SK-N-SH (cell line): ENCODE measurements at regions of chr11 and their contacts with region 1.

Region 1: GRCh38 chr11:124837491-124837856 is 27.8 kb upstream of the ROBO3 start:
- DNase-seq: peak; percentile 70
- H3K4me3 ChIP-seq: peak overlapping the region in 1 of 2 experiments; percentile 52; a peak in 2 of 4 replicates
- H3K27ac ChIP-seq: peak overlapping the region in 1 of 2 experiments; percentile 54; a peak in 1 of 4 replicates
- H3K4me1 ChIP-seq: peaks cover 3 to 4% of the 10 kb centered on the region in 2 experiments; a peak in 2 of 4 replicates
- H3K27me3 ChIP-seq: peaks cover 1% of the 10 kb centered on the region
- CTCF ChIP-seq: peak; percentile 60
- EP300 ChIP-seq: no peak
- RAD21 ChIP-seq: peak; percentile 77

Region 2: DNA sequence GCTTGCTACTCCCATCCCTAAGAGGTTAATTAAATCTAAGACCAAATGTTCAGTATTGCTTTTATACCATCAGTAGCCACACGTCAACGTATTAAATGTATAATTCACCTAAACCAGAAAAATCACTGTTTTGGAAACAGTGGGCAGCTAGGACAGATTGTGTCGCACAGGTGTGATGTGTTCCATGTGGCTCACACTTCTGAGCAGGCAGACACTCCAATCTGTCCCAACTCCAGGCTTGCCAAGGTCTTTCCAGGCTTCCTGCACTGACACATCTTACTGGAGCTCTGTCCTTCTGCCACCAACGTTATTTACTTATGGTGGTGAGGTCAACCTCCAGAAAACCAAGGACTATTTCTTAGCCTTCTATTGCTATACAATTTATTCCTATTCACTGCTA is 175.4 kb before region 1 on chr11:
- CTCF ChIA-PET with region 1: interaction called, 26 read pairs
- POLR2A ChIA-PET with region 1: no interaction called
- DNase-seq: no peak
- H3K4me3 ChIP-seq: no peak overlapping the region
- H3K27ac ChIP-seq: no peak overlapping the region
- H3K4me1 ChIP-seq: peaks cover 0 to 5% of the 10 kb centered on the region in 2 experiments; a peak in 2 of 4 replicates
- H3K27me3 ChIP-seq: no peaks in the 10 kb centered on the region
- CTCF ChIP-seq: no peak
- EP300 ChIP-seq: no peak
- RAD21 ChIP-seq: no peak

Region 3: DNA sequence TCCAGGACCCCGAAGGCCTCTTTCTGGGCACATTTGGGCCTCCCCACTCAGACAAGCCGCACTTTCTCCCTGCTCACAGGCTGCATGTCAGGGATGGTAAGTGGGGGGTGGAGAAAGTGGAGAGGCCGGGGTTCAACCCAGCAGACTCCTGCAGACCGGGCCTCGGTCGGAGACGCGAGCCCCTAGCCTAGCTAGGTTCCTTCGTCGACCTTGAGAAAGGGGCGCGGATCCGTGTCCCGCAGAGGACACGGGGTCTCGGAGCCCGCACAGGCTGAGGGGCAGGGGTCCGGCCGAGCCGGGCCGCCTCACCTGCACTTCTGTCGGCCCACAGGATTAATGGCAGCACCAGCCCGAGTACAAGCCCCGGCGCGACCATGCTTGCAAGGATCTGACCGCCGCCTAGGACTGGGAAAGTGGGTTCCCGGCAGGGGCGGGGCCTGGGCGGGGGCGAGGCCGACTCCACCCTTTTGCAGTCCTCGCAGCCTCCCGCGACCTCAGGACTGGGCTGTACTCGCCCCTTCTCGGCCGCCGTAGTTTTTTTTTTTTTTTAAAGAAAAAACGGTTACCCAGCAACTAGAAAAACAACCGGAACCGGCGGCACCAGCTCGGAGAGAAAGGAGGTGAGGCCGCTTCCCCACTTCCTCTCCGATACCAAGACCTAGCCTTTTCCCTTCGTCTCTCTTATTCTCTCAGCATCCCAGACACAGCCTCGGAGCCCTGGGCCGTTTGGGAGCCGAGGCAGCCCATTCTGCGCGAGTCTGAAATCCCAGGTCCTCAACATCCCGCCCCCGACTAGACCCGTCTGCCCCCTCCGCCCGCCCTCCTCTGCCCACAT is 163.9 kb before region 1 on chr11 and contains the starts of genes SIAE and SPA17:
- CTCF ChIA-PET with region 1: interaction called, 46 read pairs
- POLR2A ChIA-PET with region 1: no interaction called
- DNase-seq: peak; percentile 97
- H3K4me3 ChIP-seq: peak within 1 kb of the TSS; percentile 87 to 89
- H3K27ac ChIP-seq: peak within 1 kb of the TSS; percentile 87 to 88
- H3K4me1 ChIP-seq: peaks cover 0 to 11% of the 10 kb centered on the region in 2 experiments; a peak in 1 of 4 replicates
- H3K27me3 ChIP-seq: no peaks in the 10 kb centered on the region
- CTCF ChIP-seq: no peak
- EP300 ChIP-seq: peak in 1 of 2 experiments; percentile 48; a peak in 1 of 4 replicates
- RAD21 ChIP-seq: no peak
- polyA plus RNA-seq, gene SIAE: 27.9 and 47.0 TPM in 2 replicates
- polyA plus RNA-seq, gene SPA17: 7.7 and 11.7 TPM in 2 replicates

Region 4: DNA sequence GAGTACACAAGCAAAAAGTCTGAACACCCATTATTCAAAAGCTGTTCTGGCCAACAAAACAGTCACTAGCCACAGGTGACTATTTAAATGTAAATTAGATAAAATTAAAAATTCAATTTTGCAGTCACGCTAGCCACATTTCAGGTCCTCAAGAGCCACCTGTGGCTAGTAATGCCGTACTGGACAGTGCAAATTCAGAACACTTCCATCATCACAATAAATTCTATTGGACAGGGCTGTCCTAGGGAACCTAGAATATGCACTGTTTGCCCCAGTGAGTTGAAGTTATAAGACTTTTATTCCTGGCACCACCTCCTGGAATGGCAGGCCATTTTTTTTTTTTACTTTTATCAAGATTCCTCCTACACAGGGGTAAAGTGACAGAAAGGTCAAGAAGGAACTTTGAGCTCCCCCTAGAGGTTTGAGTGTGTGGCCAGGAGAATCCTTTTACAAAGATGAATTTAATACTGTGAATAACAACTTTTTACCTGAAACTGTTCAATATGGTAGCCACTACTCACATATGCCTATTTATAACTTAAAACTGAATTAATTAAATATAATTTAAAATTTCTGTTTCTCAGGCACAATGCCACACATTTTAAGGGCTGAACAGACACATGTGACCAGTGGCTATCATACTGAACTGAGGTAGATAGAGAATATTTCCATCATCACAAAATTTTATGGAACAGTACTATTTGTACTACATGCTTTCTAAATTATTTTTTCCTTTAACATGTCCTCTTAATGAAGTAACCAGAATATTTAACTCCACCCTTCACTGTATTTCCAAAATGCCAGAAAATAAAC is 43.8 kb before region 1 on chr11:
- CTCF ChIA-PET with region 1: interaction called, 23 read pairs
- POLR2A ChIA-PET with region 1: no interaction called
- DNase-seq: peak; percentile 52
- H3K4me3 ChIP-seq: no peak overlapping the region
- H3K27ac ChIP-seq: no peak overlapping the region
- H3K4me1 ChIP-seq: peaks cover 9 to 16% of the 10 kb centered on the region in 2 experiments; a peak in 3 of 4 replicates
- H3K27me3 ChIP-seq: no peaks in the 10 kb centered on the region
- CTCF ChIP-seq: peak; percentile 82
- EP300 ChIP-seq: no peak
- RAD21 ChIP-seq: peak; percentile 67

Region 5: GRCh38 chr11:124800226-124800929 is 37.1 kb before region 1 on chr11 and contains the start of gene MSANTD2:
- CTCF ChIA-PET with region 1: interaction called, 23 read pairs
- POLR2A ChIA-PET with region 1: no interaction called
- DNase-seq: peak; percentile 93
- H3K4me3 ChIP-seq: peak within 1 kb of the TSS; percentile 68 to 70
- H3K27ac ChIP-seq: peak within 1 kb of the TSS; percentile 95 to 97
- H3K4me1 ChIP-seq: peaks cover 8 to 10% of the 10 kb centered on the region in 2 experiments; a peak in 3 of 4 replicates
- H3K27me3 ChIP-seq: no peaks in the 10 kb centered on the region
- CTCF ChIP-seq: no peak
- EP300 ChIP-seq: 0 out of 4 replicates have a peak, but pooled peaks of 1 of the 2 experiments have one; percentile 8
- RAD21 ChIP-seq: 0 out of 2 replicates have a peak, but pooled peaks have one; percentile 2
- polyA plus RNA-seq, gene MSANTD2: 6.4 and 8.5 TPM in 2 replicates

Region 6: DNA sequence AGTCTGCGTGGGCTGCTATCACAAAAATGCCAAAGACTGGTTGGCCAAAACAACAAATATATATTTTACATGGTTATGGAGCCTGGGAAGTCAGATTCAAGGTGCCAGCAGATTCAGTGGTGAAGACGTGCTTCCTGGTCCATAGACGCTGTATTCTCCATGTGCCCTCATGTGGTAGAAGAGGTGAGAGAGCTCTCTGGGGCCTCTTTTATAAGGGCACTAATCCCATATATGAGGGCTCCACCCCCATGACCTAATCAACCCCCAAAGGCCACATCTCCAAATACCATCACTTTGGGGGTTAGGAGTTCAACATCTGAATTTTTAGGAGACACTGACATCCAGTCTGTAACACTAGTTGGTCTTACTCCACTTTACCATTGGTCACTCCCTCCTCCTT is 18.0 kb after region 1 on chr11:
- CTCF ChIA-PET with region 1: interaction called, 25 read pairs
- POLR2A ChIA-PET with region 1: no interaction called
- DNase-seq: no peak
- H3K4me3 ChIP-seq: no peak overlapping the region
- H3K27ac ChIP-seq: no peak overlapping the region
- H3K4me1 ChIP-seq: no peaks in the 10 kb centered on the region
- H3K27me3 ChIP-seq: peaks cover 19% of the 10 kb centered on the region; the same call in 1 of the 2 replicates
- CTCF ChIP-seq: no peak
- EP300 ChIP-seq: no peak
- RAD21 ChIP-seq: no peak

Region 7: GRCh38 chr11:124875943-124876817 is 38.7 kb after region 1 on chr11:
- CTCF ChIA-PET with region 1: interaction called, 220 read pairs
- POLR2A ChIA-PET with region 1: no interaction called
- DNase-seq: peak; percentile 96
- H3K4me3 ChIP-seq: peak overlapping the region; percentile 73 to 80
- H3K27ac ChIP-seq: peak overlapping the region; percentile 93 to 94
- H3K4me1 ChIP-seq: peaks cover 0 to 17% of the 10 kb centered on the region in 2 experiments; a peak in 1 of 4 replicates
- H3K27me3 ChIP-seq: no peaks in the 10 kb centered on the region
- CTCF ChIP-seq: peak; percentile 75
- EP300 ChIP-seq: no peak
- RAD21 ChIP-seq: peak; percentile 32; the same call in 1 of the 2 replicates

Region 8: DNA sequence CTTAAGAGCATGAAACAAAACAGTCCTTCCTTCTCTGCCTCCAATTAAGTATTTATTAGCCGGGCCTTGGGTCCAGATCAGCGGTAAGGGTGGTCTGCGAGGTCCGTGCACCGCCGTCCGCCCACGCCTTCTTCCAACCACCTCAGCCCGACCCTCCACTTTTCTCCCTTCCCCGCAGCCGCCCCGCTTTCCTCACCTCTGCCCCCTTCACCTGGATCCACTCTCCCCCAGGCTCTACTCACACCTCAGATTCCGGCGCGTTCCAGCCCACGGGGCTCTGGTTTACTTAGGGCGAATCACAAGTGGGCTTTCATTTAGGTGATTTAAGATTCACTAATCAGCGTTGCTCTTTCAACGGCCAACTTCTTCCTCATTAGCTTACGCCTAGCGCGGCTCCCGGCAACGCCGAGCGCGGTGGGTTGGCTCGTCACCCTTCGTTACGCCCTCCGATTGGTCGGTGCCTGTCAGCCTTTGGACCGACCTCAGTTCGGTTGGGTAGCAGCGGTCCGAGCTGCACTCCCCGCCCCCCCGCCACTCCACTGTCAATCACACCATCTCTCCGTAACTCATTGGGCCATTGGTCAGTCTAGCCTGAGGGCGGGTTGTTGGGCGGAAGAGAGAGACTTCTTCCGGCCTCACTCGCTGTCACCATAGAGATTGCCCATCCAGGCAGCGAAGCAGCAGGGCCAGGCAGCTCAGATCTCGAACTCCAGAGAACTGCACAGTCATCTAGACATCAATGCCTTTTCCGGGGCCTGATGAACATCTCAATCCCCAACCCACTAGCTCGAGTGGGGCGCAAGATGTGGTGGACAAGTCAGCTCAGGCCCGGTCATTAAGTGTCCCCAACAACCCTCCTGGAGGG is 274.1 kb after region 1 on chr11 and contains the start of gene TMEM218:
- CTCF ChIA-PET with region 1: no interaction called
- POLR2A ChIA-PET with region 1: no interaction called
- DNase-seq: peak; percentile 93
- H3K4me3 ChIP-seq: peak within 1 kb of the TSS; percentile 79 to 100
- H3K27ac ChIP-seq: peak within 1 kb of the TSS; percentile 46 to 84; a peak in 3 of 4 replicates
- H3K4me1 ChIP-seq: peaks cover 5 to 8% of the 10 kb centered on the region in 2 experiments; a peak in 3 of 4 replicates
- H3K27me3 ChIP-seq: no peaks in the 10 kb centered on the region
- CTCF ChIP-seq: no peak
- EP300 ChIP-seq: no peak
- RAD21 ChIP-seq: no peak
- polyA plus RNA-seq, gene TMEM218: 34.8 and 36.2 TPM in 2 replicates